ENCODE measurements at regions of chr9 and their contacts with region 1.

Region 1: GRCh38 chr9:115013998-115014397 is 83.6 kb upstream of the TNFSF8 start:
- DNase-seq: peak; percentile 67 to 71 (median 69)
- ATAC-seq: peak; percentile 88
- H3K4me3 ChIP-seq: no peak overlapping the region
- H3K27ac ChIP-seq: no peak overlapping the region
- H3K4me1 ChIP-seq: no peaks in the 10 kb centered on the region
- H3K27me3 ChIP-seq: no peaks in the 10 kb centered on the region
- CTCF ChIP-seq: peak; percentile 77 to 89 (median 79)
- EP300 ChIP-seq: no peak
- POLR2A ChIP-seq: no peak
- RAD21 ChIP-seq: peak; percentile 84 to 87

Region 2: DNA sequence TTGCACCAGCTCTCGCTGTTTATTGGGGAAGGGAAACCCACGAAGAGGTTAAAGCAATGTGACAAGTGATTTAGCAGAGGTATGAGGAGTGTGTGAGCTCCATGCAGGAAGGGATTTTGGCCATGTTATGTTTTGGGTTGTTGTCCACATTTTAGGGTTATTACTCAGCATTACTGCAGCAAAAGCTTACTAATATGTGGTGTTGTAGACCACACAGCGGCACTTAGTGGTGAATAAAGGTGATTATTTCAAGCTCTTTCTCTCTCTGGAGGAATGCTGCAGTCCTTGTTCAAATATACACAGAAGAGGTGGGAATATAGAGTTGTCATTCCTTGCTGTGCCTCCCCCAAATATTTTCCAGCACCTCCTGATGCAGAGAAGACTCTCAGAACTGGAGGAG is 596.5 kb before region 1 on chr9:
- CTCF ChIA-PET with region 1: no interaction called
- POLR2A ChIA-PET with region 1: no interaction called
- in situ Hi-C with region 1: loop called (anchors 5 kb)
- intact Hi-C with region 1: no loop called
- DNase-seq: no peak
- ATAC-seq: peak; percentile 54; the same call in 2 of the 3 replicates
- H3K4me3 ChIP-seq: no peak overlapping the region
- H3K27ac ChIP-seq: no peak overlapping the region
- H3K4me1 ChIP-seq: no peaks in the 10 kb centered on the region
- H3K27me3 ChIP-seq: no peaks in the 10 kb centered on the region
- CTCF ChIP-seq: 0 out of 6 replicates have a peak, but pooled peaks of 1 of the 3 experiments have one; percentile 10
- EP300 ChIP-seq: no peak
- POLR2A ChIP-seq: no peak
- RAD21 ChIP-seq: no peak

Region 3: GRCh38 chr9:114674798-114675540 is 339.0 kb before region 1 on chr9:
- CTCF ChIA-PET with region 1: no interaction called
- POLR2A ChIA-PET with region 1: interaction called, 3 read pairs
- in situ Hi-C with region 1: loop called (anchors 5 kb)
- intact Hi-C with region 1: no loop called
- DNase-seq: no peak
- ATAC-seq: no peak
- H3K4me3 ChIP-seq: no peak overlapping the region
- H3K27ac ChIP-seq: no peak overlapping the region
- H3K4me1 ChIP-seq: peaks cover 0 to 3% of the 10 kb centered on the region in 2 experiments; a peak in 1 of 5 replicates
- H3K27me3 ChIP-seq: peaks cover 4% of the 10 kb centered on the region in 2 experiments; a peak in 3 of 5 replicates
- CTCF ChIP-seq: no peak
- EP300 ChIP-seq: no peak
- POLR2A ChIP-seq: no peak
- RAD21 ChIP-seq: no peak

Region 4: GRCh38 chr9:114738581-114739316 is 275.2 kb before region 1 on chr9:
- CTCF ChIA-PET with region 1: interaction called, 7 read pairs
- POLR2A ChIA-PET with region 1: no interaction called
- in situ Hi-C with region 1: loop called (anchors 5 kb)
- intact Hi-C with region 1: loop called (anchors 1 kb)
- DNase-seq: peak; percentile 68 to 75 (median 72)
- ATAC-seq: peak; percentile 97
- H3K4me3 ChIP-seq: no peak overlapping the region
- H3K27ac ChIP-seq: no peak overlapping the region
- H3K4me1 ChIP-seq: no peaks in the 10 kb centered on the region
- H3K27me3 ChIP-seq: no peaks in the 10 kb centered on the region
- CTCF ChIP-seq: peak; percentile 74 to 87 (median 83)
- EP300 ChIP-seq: no peak
- POLR2A ChIP-seq: no peak
- RAD21 ChIP-seq: peak; percentile 89 to 94

Region 5: GRCh38 chr9:115085773-115086377 is 71.9 kb after region 1 on chr9:
- CTCF ChIA-PET with region 1: no interaction called
- POLR2A ChIA-PET with region 1: no interaction called
- in situ Hi-C with region 1: no loop called
- intact Hi-C with region 1: no loop called
- DNase-seq: no peak
- ATAC-seq: peak; percentile 36; the same call in 2 of the 3 replicates
- H3K4me3 ChIP-seq: no peak overlapping the region
- H3K27ac ChIP-seq: no peak overlapping the region
- H3K4me1 ChIP-seq: no peaks in the 10 kb centered on the region
- H3K27me3 ChIP-seq: peaks cover 0 to 22% of the 10 kb centered on the region in 2 experiments; a peak in 2 of 5 replicates
- CTCF ChIP-seq: no peak
- EP300 ChIP-seq: no peak
- POLR2A ChIP-seq: no peak
- RAD21 ChIP-seq: no peak

Region 6: DNA sequence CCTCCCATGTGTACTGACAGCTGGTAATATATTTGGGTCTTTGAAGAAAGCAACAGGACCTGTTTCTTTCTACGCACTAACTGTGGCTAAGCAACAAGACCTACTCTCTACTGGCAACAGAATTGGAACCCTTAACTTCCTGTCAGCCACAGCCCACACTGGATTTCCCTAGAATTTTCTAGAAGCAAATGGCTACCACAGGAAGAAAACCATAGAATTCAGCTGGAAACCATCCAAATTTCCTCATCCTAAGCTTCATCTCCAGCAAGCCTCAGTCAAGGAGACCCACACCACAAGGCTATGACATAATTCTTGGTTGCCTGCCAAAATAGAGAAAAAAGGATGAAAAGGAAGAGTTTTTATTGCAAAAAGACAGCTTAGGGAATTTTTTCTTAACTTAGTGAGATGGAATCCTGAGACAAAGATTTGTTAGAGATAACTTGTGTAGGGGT is 275.8 kb after region 1 on chr9:
- CTCF ChIA-PET with region 1: no interaction called
- POLR2A ChIA-PET with region 1: no interaction called
- in situ Hi-C with region 1: no loop called
- intact Hi-C with region 1: no loop called
- DNase-seq: no peak
- ATAC-seq: no peak
- H3K4me3 ChIP-seq: no peak overlapping the region
- H3K27ac ChIP-seq: no peak overlapping the region
- H3K4me1 ChIP-seq: no peaks in the 10 kb centered on the region
- H3K27me3 ChIP-seq: no peaks in the 10 kb centered on the region
- CTCF ChIP-seq: no peak
- EP300 ChIP-seq: no peak
- POLR2A ChIP-seq: no peak
- RAD21 ChIP-seq: no peak

Measured in K562 (cell line).